ENCODE measurements at regions of chr3 and their contacts with region 1.

Region 1: GRCh38 chr3:49108346-49108745 is 3.8 kb upstream of the QARS1 start:
- DNase-seq: no peak
- ATAC-seq: no peak
- H3K4me3 ChIP-seq: no peak overlapping the region
- H3K4me3 Mint-ChIP-seq: no peak overlapping the region
- H3K27ac ChIP-seq: no peak overlapping the region
- H3K27ac Mint-ChIP-seq: no peak overlapping the region
- H3K4me1 ChIP-seq: peaks cover 4 to 20% of the 10 kb centered on the region in 2 experiments
- H3K4me1 Mint-ChIP-seq: peaks cover 25 to 29% (median 25%) of the 10 kb centered on the region in 3 donors
- H3K27me3 ChIP-seq: no peaks in the 10 kb centered on the region
- H3K27me3 Mint-ChIP-seq: no peaks in the 10 kb centered on the region

Region 2: GRCh38 chr3:48919215-48920155 is 188.9 kb before region 1 on chr3:
- CTCF ChIA-PET with region 1: no interaction called
- POLR2A ChIA-PET with region 1: interaction called in 1 of 2 experiments, 13 read pairs
- DNase-seq: peak in 34 of 35 experiments; percentile 12 to 79 (median 41)
- ATAC-seq: peak; percentile 36 to 49 (median 45)
- H3K4me3 ChIP-seq: peak overlapping the region; percentile 95 to 99
- H3K4me3 Mint-ChIP-seq: peak overlapping the region; percentile 95 to 99 (median 98)
- H3K27ac ChIP-seq: peak overlapping the region; percentile 99
- H3K27ac Mint-ChIP-seq: peak overlapping the region; percentile 91 to 98
- H3K4me1 ChIP-seq: peaks cover 0 to 38% of the 10 kb centered on the region in 2 experiments
- H3K4me1 Mint-ChIP-seq: peaks cover 26 to 35% (median 32%) of the 10 kb centered on the region in 3 donors
- H3K27me3 ChIP-seq: no peaks in the 10 kb centered on the region
- H3K27me3 Mint-ChIP-seq: no peaks in the 10 kb centered on the region

Region 3: DNA sequence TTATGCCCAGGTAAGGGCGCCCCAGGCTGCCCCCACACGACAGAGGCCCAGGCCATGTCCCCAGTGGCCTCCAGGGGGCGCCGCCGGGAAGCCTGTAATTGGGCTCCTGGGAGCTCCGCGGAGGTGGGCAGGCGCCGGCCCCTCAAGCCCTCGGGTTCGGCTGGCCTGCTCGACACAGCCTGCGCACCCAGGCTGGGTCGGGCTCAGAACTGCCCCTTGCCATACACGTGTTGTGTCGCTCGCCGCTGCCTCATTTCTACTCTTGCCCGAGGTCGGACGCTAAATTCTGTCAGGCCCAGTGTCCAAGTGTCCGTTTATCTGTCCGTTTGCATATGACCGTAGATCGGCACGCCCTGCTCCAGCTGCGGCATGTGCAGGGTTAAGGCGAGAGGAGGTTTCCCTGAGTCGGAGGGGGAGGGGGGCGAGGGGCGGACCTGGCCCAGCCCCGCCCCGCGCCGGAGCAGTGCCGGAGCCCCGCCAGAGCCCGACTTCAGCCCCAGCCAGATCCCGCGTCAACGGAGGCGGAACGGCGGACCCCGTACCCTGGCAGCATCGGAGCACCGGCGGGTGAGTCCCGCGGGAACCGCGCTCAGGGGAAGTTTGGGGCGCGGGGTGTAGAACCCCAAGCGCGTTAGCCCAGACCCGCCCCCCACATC is 62.9 kb after region 1 on chr3 and contains the start of gene KLHDC8B:
- CTCF ChIA-PET with region 1: no interaction called
- POLR2A ChIA-PET with region 1: interaction called in 1 of 2 experiments, 13 read pairs
- DNase-seq: peak; percentile 55 to 87 (median 77)
- ATAC-seq: peak; percentile 84 to 89 (median 84)
- H3K4me3 ChIP-seq: peak within 1 kb of the TSS; percentile 83 to 87
- H3K4me3 Mint-ChIP-seq: peak within 1 kb of the TSS; percentile 84 to 87 (median 86)
- H3K27ac ChIP-seq: no peak within 1 kb of the TSS
- H3K27ac Mint-ChIP-seq: peak within 1 kb of the TSS; percentile 71 to 72
- H3K4me1 ChIP-seq: peaks cover 7 to 37% of the 10 kb centered on the region in 2 experiments
- H3K4me1 Mint-ChIP-seq: peaks cover 24 to 31% (median 24%) of the 10 kb centered on the region in 3 donors
- H3K27me3 ChIP-seq: peaks cover 0 to 25% of the 10 kb centered on the region in 2 experiments
- H3K27me3 Mint-ChIP-seq: peaks cover 0 to 3% of the 10 kb centered on the region in 2 donors
- total RNA-seq, gene KLHDC8B: 2.0 to 7.3 (median 4.7) TPM

Region 4: DNA sequence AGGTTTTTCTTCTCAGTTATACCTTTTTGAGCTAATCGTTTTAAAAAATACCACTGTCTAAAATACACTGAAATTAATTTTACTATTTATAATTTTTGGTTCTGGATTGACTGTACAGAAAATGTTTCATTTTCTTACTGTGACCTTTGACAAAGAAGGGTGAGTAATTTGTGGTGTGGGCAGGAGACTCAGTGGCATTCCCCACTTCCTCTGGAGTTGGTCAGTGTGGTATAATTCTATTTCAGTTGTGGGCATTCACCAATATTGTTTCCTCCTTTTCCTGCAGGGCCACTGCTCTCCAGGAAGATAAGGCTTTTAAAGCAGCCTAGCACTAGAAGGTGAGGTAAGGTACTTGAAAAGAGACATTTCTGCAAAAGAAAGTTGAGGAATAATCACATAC is 368.2 kb after region 1 on chr3:
- CTCF ChIA-PET with region 1: no interaction called
- POLR2A ChIA-PET with region 1: interaction called in 1 of 2 experiments, 11 read pairs
- DNase-seq: no peak
- ATAC-seq: no peak
- H3K4me3 ChIP-seq: no peak overlapping the region
- H3K4me3 Mint-ChIP-seq: no peak overlapping the region
- H3K27ac ChIP-seq: no peak overlapping the region
- H3K27ac Mint-ChIP-seq: peak overlapping the region in 1 of 2 donors; percentile 16
- H3K4me1 ChIP-seq: peaks cover 6 to 13% of the 10 kb centered on the region in 2 experiments
- H3K4me1 Mint-ChIP-seq: peaks cover 8 to 23% (median 17%) of the 10 kb centered on the region in 3 donors
- H3K27me3 ChIP-seq: no peaks in the 10 kb centered on the region
- H3K27me3 Mint-ChIP-seq: no peaks in the 10 kb centered on the region